H1 (cell line): ENCODE measurements at regions of chr19 and their contacts with region 1.

Region 1: DNA sequence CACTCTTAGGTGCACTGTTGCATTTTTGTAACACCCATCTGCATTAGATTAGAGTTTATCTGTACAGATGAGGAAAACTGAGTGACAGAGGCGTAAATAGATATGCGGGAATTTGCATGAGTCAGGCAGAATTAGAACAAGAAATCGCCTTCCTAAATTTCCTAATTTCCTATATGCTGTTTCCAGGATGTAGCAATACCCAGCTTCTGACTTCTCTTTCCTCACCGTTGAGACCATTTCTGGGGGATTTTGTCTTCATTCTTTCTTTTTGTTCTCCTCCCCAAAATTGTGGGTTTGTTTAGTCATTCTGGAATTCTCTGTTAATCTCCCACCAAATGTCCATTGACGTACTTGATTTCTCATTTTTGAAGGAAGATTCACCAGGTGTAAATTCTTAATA is 10.6 kb upstream of the ZNF792 start:
- DNase-seq: no peak
- H3K4me3 ChIP-seq: no peak overlapping the region
- H3K27ac ChIP-seq: no peak overlapping the region
- H3K4me1 ChIP-seq: peaks cover 0 to 3% (median 0%) of the 10 kb centered on the region in 4 experiments; a peak in 3 of 7 replicates
- H3K27me3 ChIP-seq: no peaks in the 10 kb centered on the region
- CTCF ChIP-seq: no peak
- EP300 ChIP-seq: no peak
- POLR2A ChIP-seq: no peak
- RAD21 ChIP-seq: no peak

Region 2: DNA sequence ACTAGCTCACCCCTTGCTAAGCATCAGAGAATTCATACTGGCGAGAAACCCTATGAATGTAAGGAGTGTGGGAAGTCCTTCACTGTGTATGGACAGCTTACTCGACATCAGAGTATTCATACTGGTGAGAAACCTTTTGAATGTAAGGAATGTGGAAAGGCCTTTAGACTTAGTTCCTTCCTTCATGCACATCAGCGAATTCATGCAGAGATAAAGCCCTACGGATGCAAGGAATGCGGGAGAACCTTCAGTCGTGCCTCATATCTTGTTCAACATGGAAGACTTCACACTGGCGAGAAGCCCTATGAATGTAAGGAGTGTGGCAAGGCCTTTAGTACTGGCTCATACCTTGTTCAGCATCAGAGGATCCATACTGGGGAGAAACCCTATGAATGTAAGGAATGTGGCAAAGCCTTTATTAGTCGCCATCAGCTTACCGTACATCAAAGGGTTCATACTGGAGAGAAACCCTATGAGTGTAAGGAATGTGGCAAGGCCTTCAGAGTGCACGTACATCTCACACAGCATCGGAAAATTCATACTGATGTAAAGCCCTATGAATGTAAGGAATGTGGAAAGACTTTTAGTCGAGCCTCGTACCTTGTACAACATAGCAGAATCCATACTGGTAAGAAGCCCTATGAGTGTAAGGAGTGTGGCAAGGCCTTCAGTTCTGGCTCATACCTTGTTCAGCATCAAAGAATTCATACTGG is 30.6 kb before region 1 on chr19:
- CTCF ChIA-PET with region 1: no interaction called
- POLR2A ChIA-PET with region 1: no interaction called
- DNase-seq: no peak
- H3K4me3 ChIP-seq: no peak overlapping the region
- H3K27ac ChIP-seq: no peak overlapping the region
- H3K4me1 ChIP-seq: no peaks in the 10 kb centered on the region
- H3K27me3 ChIP-seq: peaks cover 0 to 1% (median 0%) of the 10 kb centered on the region in 4 experiments; a peak in 1 of 7 replicates
- CTCF ChIP-seq: no peak
- EP300 ChIP-seq: no peak
- POLR2A ChIP-seq: no peak
- RAD21 ChIP-seq: no peak

Region 3: DNA sequence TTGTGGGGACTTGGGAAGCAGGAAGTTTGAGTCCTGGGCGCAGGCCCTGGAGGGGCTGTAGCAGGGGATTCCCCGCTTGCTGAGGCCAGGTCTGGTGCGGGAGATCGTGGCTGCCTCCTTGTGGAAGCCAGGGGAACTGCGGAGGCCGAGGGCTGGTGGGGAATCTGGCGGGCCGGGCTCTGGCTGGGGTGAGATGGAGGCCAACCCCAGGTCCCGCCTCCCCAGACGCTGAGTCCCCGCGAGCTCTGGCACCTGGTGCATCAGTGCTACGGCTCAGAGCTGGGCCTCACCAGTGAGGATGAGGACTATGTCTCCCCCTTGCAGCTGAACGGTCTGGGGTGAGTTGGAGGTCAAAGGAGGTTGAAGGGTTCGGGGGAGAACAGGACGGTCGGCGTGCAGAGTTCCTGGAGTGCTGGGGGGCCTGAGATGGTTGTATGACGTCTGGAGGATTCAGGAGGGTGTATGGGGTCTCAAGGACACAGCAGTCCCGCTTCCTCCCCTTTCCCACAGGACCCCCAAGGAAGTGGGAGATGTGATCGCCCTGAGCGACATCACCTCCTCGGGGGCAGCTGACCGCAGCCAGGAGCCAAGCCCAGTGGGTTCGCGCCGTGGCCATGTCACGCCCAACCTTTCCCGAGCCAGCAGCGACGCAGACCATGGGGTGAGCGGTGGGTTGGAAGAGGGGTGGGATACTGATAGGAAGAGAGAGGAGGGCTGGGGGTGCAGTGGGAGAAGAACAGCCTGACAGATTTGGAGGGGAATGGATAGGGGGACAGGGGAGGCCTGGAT is 38.6 kb after region 1 on chr19:
- CTCF ChIA-PET with region 1: interaction called, 174 read pairs
- POLR2A ChIA-PET with region 1: interaction called, 8 read pairs
- DNase-seq: peak in 1 of 2 experiments; percentile 97
- H3K4me3 ChIP-seq: no peak overlapping the region
- H3K27ac ChIP-seq: 0 out of 2 replicates have a peak overlapping the region, but pooled peaks have one; percentile 9
- H3K4me1 ChIP-seq: no peaks in the 10 kb centered on the region
- H3K27me3 ChIP-seq: no peaks in the 10 kb centered on the region; a peak in 1 of 7 replicates
- CTCF ChIP-seq: peak; percentile 96 to 98 (median 98)
- EP300 ChIP-seq: no peak
- POLR2A ChIP-seq: peak in 1 of 2 experiments; percentile 34; a peak in 2 of 3 replicates
- RAD21 ChIP-seq: peak; percentile 96

Region 4: DNA sequence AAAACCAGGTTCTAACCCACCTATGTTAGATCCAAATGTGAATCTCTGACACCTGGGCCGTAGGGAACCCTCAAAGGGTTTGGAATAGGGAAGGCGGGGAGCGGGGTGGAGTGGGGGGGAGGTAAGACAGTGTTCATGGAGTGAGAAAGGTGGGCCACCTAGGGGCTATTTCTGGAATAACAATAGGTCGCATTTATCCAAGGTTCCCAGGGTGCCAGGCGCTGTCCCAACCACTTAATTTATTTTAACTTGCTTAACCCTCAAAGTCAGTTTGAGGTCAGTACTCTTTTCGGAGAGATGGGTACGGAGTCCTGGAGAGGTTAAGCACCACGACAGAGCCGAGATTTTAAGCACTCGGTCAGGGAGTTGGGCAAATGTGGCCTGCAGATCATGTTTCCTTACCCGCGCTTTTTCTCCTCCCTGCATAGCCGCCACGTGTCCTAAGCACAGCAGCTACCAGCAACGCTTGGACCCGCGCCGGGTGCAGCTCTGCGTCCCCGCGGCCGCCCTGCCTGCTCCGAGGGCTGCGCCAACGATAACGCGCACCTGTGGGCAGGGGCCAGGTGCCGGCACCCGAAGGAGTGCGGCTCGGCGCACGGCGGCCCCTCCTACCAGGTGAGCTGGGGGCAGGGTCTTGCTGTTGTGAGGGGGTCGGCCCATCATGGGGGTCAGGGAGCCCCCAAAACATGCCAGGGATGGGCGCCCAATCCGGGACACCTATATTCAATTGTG is 116.0 kb after region 1 on chr19:
- CTCF ChIA-PET with region 1: no interaction called
- POLR2A ChIA-PET with region 1: no interaction called
- DNase-seq: peak in 1 of 2 experiments; percentile 80
- H3K4me3 ChIP-seq: peak overlapping the region; percentile 13 to 45 (median 36); a peak in 7 of 8 replicates
- H3K27ac ChIP-seq: no peak overlapping the region
- H3K4me1 ChIP-seq: peaks cover 3 to 14% (median 6%) of the 10 kb centered on the region in 4 experiments; a peak in 6 of 7 replicates
- H3K27me3 ChIP-seq: no peaks in the 10 kb centered on the region
- CTCF ChIP-seq: peak; percentile 38 to 49 (median 40)
- EP300 ChIP-seq: no peak
- POLR2A ChIP-seq: 0 out of 3 replicates have a peak, but pooled peaks of 1 of the 2 experiments have one; percentile 19
- RAD21 ChIP-seq: peak; percentile 52 to 59